Esophagus muscularis mucosa (tissue), 4 donors: ENCODE measurements at regions of chrX and their contacts with region 1.

Region 1: GRCh38 chrX:104007242-104007641 is 6.3 kb downstream of the H2BW1 start:
- DNase-seq: no peak
- H3K4me3 ChIP-seq: no peak overlapping the region
- H3K27ac ChIP-seq: no peak overlapping the region
- H3K4me1 ChIP-seq: no peaks in the 10 kb centered on the region
- H3K27me3 ChIP-seq: peaks cover 0 to 5% (median 0%) of the 10 kb centered on the region in 4 donors
- CTCF ChIP-seq: no peak
- EP300 ChIP-seq: no peak
- POLR2A ChIP-seq: no peak

Region 2: DNA sequence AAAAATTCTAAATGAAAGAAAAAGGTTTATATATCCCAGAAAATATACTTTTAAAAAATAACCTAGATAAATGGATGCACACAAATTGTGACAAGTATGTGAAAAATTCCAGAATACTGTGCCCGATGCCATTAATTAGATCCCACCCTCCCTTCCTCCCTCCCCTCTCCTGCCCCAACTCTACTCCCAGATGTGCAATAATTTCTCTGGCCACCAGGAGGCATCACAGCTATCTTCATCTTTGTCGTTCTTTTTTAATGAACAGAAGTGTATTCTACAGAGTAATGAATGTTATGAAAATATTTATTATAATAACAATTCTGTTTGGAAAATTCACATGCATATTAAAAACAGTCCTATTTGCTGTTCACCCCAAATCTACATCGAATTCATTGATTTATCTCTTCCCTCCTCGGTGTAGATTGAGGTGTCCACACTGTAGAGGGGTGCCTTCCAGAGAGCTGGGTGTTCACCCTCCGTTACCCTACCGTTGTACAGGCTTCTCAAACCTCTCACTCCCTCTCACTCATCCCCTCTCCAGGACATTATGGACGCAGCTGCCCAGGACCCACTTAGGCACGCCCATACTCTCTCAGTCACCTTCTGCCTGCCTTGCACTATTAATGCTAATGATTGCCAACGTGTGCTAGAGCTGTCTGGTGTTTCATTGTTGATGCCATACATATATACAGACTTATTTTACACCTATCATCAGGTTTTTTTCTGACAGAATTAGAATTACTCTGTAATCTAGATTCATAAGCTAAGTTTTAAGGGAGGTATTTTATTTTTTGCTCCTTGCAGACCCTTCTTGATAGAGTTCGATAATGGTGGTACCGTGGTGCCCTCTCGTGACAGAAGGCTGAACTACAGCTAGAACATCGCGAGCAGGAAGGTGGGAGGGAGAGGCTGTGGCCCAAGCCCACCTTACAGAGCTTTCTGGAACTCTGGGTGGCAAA is 1056.1 kb before region 1 on chrX:
- intact Hi-C with region 1: no loop called
- DNase-seq: no peak
- H3K4me3 ChIP-seq: peak overlapping the region in 3 of 4 donors; percentile 11 to 27 (median 14)
- H3K27ac ChIP-seq: no peak overlapping the region
- H3K4me1 ChIP-seq: no peaks in the 10 kb centered on the region
- H3K27me3 ChIP-seq: no peaks in the 10 kb centered on the region
- CTCF ChIP-seq: peak; percentile 58 to 64 (median 61)
- EP300 ChIP-seq: no peak
- POLR2A ChIP-seq: no peak

Region 3: GRCh38 chrX:103918581-103919269 is 88.5 kb before region 1 on chrX:
- intact Hi-C with region 1: loop called (anchors 2 kb)
- DNase-seq: no peak
- H3K4me3 ChIP-seq: peak overlapping the region; percentile 59 to 70 (median 66)
- H3K27ac ChIP-seq: peak overlapping the region; percentile 81 to 89 (median 84)
- H3K4me1 ChIP-seq: peaks cover 0 to 5% (median 2%) of the 10 kb centered on the region in 4 donors
- H3K27me3 ChIP-seq: no peaks in the 10 kb centered on the region
- CTCF ChIP-seq: no peak
- EP300 ChIP-seq: no peak
- POLR2A ChIP-seq: no peak

Region 4: DNA sequence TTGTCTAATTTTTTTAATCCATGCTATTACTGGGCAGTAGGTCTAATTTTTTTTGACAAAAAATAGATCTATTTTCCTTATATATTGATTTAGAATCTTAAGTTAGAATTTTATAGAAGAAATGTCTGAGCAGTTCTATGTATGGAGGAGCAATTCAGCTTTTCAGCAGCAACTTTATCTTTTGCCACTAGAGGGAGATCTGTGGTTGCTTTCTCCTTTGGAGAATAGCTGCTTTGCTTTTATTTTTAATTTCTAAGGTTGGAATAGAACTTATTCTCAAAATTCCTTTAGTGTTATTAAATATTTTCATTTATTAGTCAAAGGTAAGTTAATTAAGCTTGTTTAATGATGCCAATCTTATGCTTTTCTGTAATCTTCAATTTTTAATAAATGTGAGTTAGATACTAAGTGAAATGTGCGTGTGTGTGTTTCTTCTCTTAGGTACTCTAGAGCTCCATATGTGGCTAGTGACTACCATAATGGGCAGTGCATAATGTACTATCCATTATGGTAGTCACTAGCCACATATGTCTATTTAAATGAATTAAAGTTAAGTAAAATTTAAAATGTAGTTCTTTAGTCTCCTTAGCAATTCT is 188.3 kb after region 1 on chrX:
- intact Hi-C with region 1: no loop called
- DNase-seq: no peak
- H3K4me3 ChIP-seq: no peak overlapping the region
- H3K27ac ChIP-seq: no peak overlapping the region
- H3K4me1 ChIP-seq: no peaks in the 10 kb centered on the region
- H3K27me3 ChIP-seq: no peaks in the 10 kb centered on the region
- CTCF ChIP-seq: peak; percentile 49 to 76 (median 66)
- EP300 ChIP-seq: no peak
- POLR2A ChIP-seq: no peak